ENCODE measurements at regions of chrX and their contacts with region 1.

Region 1: GRCh38 chrX:108070891-108071290 is 20.5 kb downstream of the PSMD10 start:
- DNase-seq: no peak
- H3K4me3 ChIP-seq: no peak overlapping the region
- H3K4me3 Mint-ChIP-seq: no peak overlapping the region
- H3K27ac Mint-ChIP-seq: no peak overlapping the region
- H3K4me1 ChIP-seq: no peaks in the 10 kb centered on the region
- H3K4me1 Mint-ChIP-seq: no peaks in the 10 kb centered on the region
- H3K27me3 ChIP-seq: no peaks in the 10 kb centered on the region
- H3K27me3 Mint-ChIP-seq: peaks cover 16% of the 10 kb centered on the region
- CTCF ChIP-seq: no peak

Region 2: DNA sequence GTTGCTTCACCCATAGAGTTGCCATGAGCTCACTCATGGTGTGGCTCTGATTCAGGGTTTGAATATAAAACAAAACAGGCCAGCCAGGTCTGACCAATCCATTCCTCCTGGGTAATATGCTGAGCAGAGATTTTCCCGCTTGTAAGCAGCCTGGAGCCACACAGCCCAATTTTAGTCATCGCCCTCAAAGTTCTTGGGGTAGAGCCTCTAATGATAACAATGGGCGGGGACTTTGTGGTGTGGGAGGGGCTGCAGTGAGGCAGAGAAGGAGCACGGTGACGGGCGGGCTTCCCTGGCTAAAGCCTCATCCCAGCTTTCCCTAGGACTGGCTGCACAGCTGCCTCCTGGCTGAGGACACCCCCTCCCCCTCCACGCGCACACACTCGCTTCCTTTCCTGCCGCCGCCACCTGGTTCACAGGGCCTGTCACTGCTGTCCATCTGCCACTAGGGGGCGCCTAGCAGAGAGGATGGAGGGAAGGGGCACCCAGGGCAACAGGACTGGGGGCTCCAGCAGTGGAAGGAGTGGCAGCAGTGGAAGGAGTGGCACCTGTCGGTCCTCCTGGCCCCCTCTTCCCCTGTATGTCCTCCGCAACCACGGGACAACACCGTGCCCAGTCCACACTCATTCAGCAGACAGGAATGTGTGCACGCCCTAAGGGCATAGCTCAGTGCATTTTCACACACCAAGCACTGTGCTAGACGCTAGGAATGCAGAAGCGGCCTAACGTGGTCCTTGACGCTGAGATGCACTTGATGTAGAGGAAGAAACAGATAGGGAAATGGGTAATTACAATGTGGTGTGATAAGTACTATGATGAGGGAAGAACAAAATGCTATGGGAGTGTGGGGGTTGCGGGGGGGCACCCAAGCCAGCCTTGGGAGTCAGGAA is 415.8 kb before region 1 on chrX:
- CTCF ChIA-PET with region 1: no interaction called
- POLR2A ChIA-PET with region 1: no interaction called
- intact Hi-C with region 1: loop called (anchors 5 kb)
- DNase-seq: peak; percentile 30 to 38
- H3K4me3 ChIP-seq: no peak overlapping the region
- H3K4me3 Mint-ChIP-seq: no peak overlapping the region
- H3K27ac Mint-ChIP-seq: peak overlapping the region; percentile 32
- H3K4me1 ChIP-seq: no peaks in the 10 kb centered on the region
- H3K4me1 Mint-ChIP-seq: no peaks in the 10 kb centered on the region
- H3K27me3 ChIP-seq: no peaks in the 10 kb centered on the region
- H3K27me3 Mint-ChIP-seq: no peaks in the 10 kb centered on the region
- CTCF ChIP-seq: peak; percentile 23 to 29

Region 3: DNA sequence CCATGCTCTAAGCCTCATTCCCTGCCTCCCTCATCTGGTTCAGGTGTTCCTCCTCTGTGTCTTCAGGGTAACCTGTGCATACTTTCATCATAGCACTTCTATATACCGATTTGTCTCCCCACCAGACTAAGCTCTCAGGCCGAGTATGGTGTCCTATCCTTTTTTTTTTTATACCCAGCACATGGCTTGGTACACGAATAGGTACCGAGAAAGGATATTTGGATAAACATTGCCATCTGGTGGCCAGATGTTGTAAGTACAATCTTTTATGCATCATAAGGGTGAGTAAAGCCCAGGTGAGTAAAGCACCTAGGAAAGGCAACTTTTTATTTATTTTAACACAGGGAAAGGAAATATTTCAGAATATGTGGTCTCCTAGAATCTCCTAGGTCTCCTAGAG is 176.9 kb before region 1 on chrX:
- CTCF ChIA-PET with region 1: no interaction called
- POLR2A ChIA-PET with region 1: no interaction called
- intact Hi-C with region 1: loop called (anchors 5 kb)
- DNase-seq: peak in 1 of 2 experiments; percentile 42
- H3K4me3 ChIP-seq: no peak overlapping the region
- H3K4me3 Mint-ChIP-seq: no peak overlapping the region
- H3K27ac Mint-ChIP-seq: no peak overlapping the region
- H3K4me1 ChIP-seq: no peaks in the 10 kb centered on the region
- H3K4me1 Mint-ChIP-seq: no peaks in the 10 kb centered on the region
- H3K27me3 ChIP-seq: no peaks in the 10 kb centered on the region
- H3K27me3 Mint-ChIP-seq: no peaks in the 10 kb centered on the region
- CTCF ChIP-seq: peak; percentile 4 to 57

Region 4: GRCh38 chrX:107978707-107979307 is 92.1 kb before region 1 on chrX:
- CTCF ChIA-PET with region 1: no interaction called
- POLR2A ChIA-PET with region 1: no interaction called
- intact Hi-C with region 1: loop called (anchors 5 kb)
- DNase-seq: peak in 1 of 2 experiments; percentile 30
- H3K4me3 ChIP-seq: no peak overlapping the region
- H3K4me3 Mint-ChIP-seq: no peak overlapping the region
- H3K27ac Mint-ChIP-seq: no peak overlapping the region
- H3K4me1 ChIP-seq: no peaks in the 10 kb centered on the region
- H3K4me1 Mint-ChIP-seq: no peaks in the 10 kb centered on the region
- H3K27me3 ChIP-seq: no peaks in the 10 kb centered on the region
- H3K27me3 Mint-ChIP-seq: peaks cover 5% of the 10 kb centered on the region
- CTCF ChIP-seq: peak in 1 of 2 experiments; percentile 45

Region 5: GRCh38 chrX:108020631-108021030 is 50.3 kb before region 1 on chrX:
- CTCF ChIA-PET with region 1: interaction called, 3 read pairs
- POLR2A ChIA-PET with region 1: no interaction called
- intact Hi-C with region 1: loop called (anchors 1 kb)
- DNase-seq: peak in 1 of 2 experiments; percentile 11
- H3K4me3 ChIP-seq: no peak overlapping the region
- H3K4me3 Mint-ChIP-seq: no peak overlapping the region
- H3K27ac Mint-ChIP-seq: no peak overlapping the region
- H3K4me1 ChIP-seq: no peaks in the 10 kb centered on the region
- H3K4me1 Mint-ChIP-seq: no peaks in the 10 kb centered on the region
- H3K27me3 ChIP-seq: no peaks in the 10 kb centered on the region
- H3K27me3 Mint-ChIP-seq: no peaks in the 10 kb centered on the region
- CTCF ChIP-seq: peak; percentile 28 to 34

Measured in Caco-2 (cell line).